A673 (cell line): ENCODE measurements at regions of chr2 and their contacts with region 1.

Region 1: DNA sequence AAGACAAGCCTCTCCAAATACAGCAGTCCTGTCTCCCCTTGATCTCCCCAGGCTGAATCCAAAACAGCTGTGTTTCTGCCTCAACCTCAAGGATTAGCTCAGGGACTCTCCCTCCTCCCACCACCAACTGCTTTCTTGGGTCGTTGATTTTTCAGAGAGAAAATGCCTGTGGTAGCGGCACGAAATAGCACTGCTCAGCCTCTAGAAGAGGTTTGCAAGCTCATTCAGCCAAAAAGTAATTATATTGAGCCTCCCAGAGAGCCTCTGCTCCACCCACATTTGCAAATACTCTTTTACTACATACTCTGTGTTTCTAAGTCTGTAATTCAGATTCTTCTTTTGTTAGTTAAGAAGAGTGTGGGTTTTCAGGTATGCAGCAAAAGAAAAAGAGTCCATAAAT is 396.4 kb upstream of the TNP1 start:
- DNase-seq: peak; percentile 29
- H3K4me3 ChIP-seq: no peak overlapping the region
- H3K27ac ChIP-seq: peak overlapping the region; percentile 28
- H3K4me1 ChIP-seq: peaks cover 10% of the 10 kb centered on the region
- H3K27me3 ChIP-seq: no peaks in the 10 kb centered on the region
- CTCF ChIP-seq: no peak

Region 2: GRCh38 chr2:216392945-216393840 is 863.1 kb before region 1 on chr2:
- CTCF ChIA-PET with region 1: no interaction called
- POLR2A ChIA-PET with region 1: interaction called, 14 read pairs
- intact Hi-C with region 1: no loop called
- DNase-seq: no peak
- H3K4me3 ChIP-seq: no peak overlapping the region
- H3K27ac ChIP-seq: no peak overlapping the region
- H3K4me1 ChIP-seq: no peaks in the 10 kb centered on the region
- H3K27me3 ChIP-seq: no peaks in the 10 kb centered on the region
- CTCF ChIP-seq: no peak

Region 3: DNA sequence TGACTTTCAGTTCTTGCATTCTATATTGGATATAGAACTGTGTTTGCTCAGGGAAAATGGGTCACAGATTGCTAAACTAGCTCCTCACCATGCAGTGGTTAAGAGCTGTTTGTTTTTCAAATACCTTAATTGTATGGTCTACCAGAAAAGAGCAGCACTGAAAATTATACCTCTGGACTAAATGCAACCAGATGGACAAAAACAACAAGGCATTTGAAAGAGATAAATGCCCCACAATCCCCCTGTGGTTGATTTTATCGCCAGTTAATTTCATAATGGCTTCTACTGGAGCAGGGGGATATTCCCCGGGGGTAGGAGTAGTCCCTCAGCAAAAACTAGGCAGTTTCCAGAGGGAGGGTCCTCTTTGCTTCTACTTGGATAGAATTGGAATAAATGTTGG is 128.5 kb before region 1 on chr2:
- CTCF ChIA-PET with region 1: no interaction called
- POLR2A ChIA-PET with region 1: interaction called, 12 read pairs
- intact Hi-C with region 1: no loop called
- DNase-seq: no peak
- H3K4me3 ChIP-seq: no peak overlapping the region
- H3K27ac ChIP-seq: no peak overlapping the region
- H3K4me1 ChIP-seq: no peaks in the 10 kb centered on the region
- H3K27me3 ChIP-seq: no peaks in the 10 kb centered on the region
- CTCF ChIP-seq: no peak

Region 4: DNA sequence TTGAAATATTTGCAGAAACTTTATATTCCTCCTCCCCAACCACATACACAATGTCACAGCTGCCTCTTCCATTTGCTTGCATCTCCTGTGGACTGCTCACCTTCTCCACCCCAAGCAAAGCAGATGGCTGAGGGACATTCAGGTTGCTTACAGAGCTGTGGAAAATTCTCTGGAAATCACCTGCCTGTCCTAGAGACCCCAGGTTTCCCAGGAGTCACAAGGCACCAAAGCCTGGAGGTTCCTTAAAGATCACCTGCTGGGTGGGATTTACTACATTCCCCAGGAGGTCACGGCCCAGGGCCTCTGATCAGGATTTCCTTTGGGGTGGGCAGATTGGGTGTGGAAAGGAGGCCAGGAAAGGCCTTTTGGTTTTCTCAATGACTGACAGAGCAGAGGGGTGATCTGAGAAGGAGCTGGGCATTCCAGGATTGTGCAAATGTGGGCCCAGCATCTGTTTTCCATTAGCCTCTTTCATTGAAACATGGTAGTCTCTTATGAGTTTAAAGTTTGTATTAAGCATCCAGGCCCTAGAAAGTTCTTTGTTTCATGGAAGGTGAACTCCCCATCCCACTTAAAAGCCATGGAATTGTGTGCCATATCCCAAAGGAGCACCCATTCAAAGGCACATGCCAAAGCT is 14.4 kb after region 1 on chr2:
- CTCF ChIA-PET with region 1: no interaction called
- POLR2A ChIA-PET with region 1: interaction called, 13 read pairs
- intact Hi-C with region 1: no loop called
- DNase-seq: no peak
- H3K4me3 ChIP-seq: no peak overlapping the region
- H3K27ac ChIP-seq: no peak overlapping the region
- H3K4me1 ChIP-seq: no peaks in the 10 kb centered on the region
- H3K27me3 ChIP-seq: no peaks in the 10 kb centered on the region
- CTCF ChIP-seq: no peak

Region 5: DNA sequence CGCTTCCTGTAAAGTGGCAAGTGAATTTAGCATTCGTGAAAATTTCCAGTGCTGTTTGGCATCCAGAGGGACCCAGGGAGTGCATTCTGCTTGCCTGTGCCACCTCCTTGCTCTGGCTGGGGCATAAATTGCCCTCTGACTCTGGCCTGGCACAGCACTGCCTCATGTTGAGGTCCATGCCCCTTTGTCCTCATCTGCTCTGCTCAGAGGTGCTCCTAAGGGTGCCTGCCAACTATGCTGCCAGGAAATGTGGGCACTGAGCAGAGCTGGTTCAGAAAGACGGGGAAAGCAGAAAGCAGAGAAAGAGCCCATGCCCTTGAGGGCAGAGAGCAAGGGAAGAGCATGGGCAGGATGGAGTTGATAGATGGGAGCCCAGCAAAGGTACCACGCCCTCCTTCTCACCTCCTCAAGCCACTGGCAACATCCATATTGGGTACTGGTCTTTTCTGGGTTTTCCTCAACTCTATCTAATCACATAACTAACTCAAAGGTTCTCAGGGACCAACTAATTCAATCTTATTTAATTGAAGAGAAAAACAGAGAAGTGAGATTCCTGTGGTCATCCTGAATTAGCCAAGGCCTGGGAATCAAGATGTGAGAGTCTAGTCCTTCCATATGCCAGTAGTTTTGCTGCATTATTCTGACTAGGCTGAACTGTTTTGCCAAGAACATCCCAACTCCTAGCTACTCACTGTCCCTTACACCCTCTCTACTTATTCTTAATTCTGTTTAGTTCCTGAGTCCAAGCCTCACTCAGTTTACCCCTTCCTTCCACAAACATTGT is 45.1 kb after region 1 on chr2:
- CTCF ChIA-PET with region 1: no interaction called
- POLR2A ChIA-PET with region 1: no interaction called
- intact Hi-C with region 1: no loop called
- DNase-seq: no peak
- H3K4me3 ChIP-seq: no peak overlapping the region
- H3K27ac ChIP-seq: no peak overlapping the region
- H3K4me1 ChIP-seq: peaks cover 4% of the 10 kb centered on the region
- H3K27me3 ChIP-seq: no peaks in the 10 kb centered on the region
- CTCF ChIP-seq: no peak